ENCODE measurements at regions of chr9 and their contacts with region 1.

Region 1: DNA sequence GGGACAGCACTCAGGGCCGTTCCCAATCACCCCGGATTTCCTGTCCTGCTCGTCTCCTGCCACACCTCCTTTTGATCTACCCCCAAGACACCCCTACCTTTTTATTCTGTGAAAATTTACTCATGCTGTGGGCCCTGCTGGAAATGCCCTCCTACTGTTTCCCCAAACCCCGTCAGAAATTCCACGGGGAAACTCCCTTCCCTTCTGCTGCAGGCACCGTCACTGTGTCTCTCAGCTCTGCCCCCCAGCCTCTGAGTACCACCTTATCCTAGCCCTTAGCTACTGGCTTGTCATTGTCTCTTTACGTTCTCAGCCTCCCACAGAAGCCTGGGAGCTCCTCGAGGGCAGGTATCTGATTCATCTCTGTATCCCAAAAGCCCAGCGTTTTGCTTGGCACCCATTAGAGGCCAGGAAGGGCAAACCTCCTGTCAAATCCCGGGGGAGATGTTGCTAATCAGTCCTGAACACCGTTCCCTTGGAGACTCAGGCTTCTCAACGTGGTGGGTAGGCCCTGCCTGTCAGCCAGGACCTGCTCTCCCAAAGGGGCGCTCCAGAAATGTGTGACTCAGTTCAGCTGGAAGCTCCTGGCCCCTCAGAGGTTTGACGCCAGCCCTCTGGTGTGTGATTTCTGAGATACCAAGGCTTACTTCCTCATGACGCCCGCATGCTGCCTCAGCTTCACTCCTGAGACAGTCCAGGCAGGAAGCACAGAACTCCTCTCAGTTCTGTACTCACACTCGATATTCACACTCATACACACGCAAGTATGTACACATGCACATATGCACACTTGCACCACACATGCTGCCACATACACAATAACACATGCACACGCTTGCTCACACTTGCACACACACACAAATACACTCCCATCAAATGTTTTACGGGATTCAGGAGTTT is 50.7 kb upstream of the GRHPR start:
- DNase-seq: no peak
- ATAC-seq: no peak
- H3K4me3 ChIP-seq: no peak overlapping the region
- H3K27ac ChIP-seq: no peak overlapping the region
- H3K4me1 ChIP-seq: no peaks in the 10 kb centered on the region
- H3K27me3 ChIP-seq: no peaks in the 10 kb centered on the region
- CTCF ChIP-seq: no peak

Region 2: GRCh38 chr9:36881743-36882441 is 489.9 kb before region 1 on chr9:
- intact Hi-C with region 1: loop called in 1 of 3 experiments (anchors 10 kb)
- DNase-seq: peak in 1 of 6 donors; percentile 38
- ATAC-seq: no peak
- H3K4me3 ChIP-seq: no peak overlapping the region
- H3K27ac ChIP-seq: no peak overlapping the region
- H3K4me1 ChIP-seq: no peaks in the 10 kb centered on the region
- H3K27me3 ChIP-seq: no peaks in the 10 kb centered on the region
- CTCF ChIP-seq: no peak

Region 3: GRCh38 chr9:37119907-37120842 is 251.6 kb before region 1 on chr9 and contains the start of gene ZCCHC7:
- intact Hi-C with region 1: no loop called
- DNase-seq: peak; percentile 95 to 99 (median 96)
- ATAC-seq: peak; percentile 97 to 99 (median 98)
- H3K4me3 ChIP-seq: peak within 1 kb of the TSS; percentile 65 to 84 (median 81)
- H3K27ac ChIP-seq: peak within 1 kb of the TSS; percentile 89 to 93 (median 91)
- H3K4me1 ChIP-seq: peaks cover 3 to 12% (median 11%) of the 10 kb centered on the region in 3 donors
- H3K27me3 ChIP-seq: no peaks in the 10 kb centered on the region
- CTCF ChIP-seq: no peak
- total RNA-seq, gene ZCCHC7: 13.4 to 17.4 (median 15.9) TPM